Endothelial cell of umbilical vein (primary cell): ENCODE measurements at regions of chr7 and their contacts with region 1.

Region 1: DNA sequence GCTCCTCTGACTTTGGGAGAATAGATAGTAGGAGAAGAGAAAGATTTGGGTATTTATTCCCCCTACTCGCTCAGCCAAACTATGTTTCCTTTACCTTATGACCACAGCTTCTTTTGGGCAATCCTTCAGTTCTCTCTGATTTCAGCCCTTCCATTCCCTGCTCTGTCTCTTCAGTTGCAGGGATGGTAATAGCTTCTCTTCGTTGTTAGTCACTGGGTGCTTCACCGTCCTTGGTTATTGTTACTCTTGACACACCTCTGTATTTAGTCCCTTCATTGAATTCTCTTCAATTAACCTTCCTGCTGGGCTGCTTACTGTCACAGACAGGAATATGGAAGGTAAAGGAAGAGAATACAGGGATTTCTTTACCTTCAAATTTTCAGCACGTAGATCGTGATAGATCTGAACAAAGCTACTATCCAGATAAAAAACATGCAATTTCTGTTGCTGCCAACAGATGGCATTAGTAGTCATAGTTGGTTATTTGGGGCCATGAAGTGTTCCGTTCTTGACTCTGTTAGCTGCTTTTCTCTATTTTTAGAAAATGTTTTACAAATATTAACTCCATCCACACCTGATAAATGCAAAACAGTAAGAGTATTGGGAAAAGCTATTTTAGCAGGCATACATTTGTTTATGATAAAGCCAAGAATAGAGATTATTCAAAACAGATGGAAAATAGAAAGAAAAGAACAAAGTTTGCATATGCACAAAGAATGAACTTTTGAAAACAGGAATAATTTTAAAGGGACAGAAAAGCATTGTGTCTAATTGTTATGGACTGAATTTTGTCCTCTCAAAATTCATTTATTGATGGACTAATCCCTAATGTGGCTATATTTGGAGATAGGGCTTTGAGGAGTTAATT is 14.0 kb upstream of the PTTG1IP2 start:
- DNase-seq: peak; percentile 57
- H3K4me3 ChIP-seq: peak overlapping the region in 1 of 3 experiments; percentile 16
- H3K27ac ChIP-seq: no peak overlapping the region
- H3K4me1 ChIP-seq: no peaks in the 10 kb centered on the region
- H3K27me3 ChIP-seq: no peaks in the 10 kb centered on the region
- CTCF ChIP-seq: peak; percentile 55 to 56
- POLR2A ChIP-seq: no peak

Region 2: DNA sequence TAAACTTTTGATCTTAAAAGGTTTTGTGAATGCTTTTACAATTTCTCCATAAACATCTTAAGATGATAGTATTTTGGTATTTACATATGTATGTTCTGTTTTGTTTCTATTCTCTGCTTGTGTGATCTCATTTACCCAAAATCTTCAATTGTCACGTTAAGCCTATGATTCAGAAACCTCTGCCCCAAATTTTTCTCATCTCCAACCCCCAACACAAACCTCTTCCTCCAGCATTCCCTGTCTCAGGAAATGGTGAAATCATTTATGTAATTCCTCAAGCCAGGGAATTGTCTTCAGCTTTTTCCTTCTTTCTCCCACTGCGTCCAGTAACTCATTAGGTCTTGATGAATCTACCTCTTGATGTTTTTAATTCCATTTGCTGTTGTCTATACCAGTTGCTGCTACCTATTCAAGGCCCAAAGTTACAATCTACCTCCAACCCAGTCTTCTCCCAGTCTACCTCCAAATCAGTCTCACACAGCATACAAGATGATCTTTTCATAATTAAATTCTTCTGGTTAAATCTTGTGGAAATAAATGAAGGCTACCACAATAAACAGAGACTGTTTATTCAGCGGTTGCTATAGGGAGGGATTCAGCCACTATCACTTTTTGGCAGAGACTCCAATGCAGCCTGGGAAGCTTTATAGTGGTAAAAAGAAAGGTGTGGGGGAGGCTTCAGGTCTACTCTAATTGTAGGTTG is 204.6 kb before region 1 on chr7:
- CTCF ChIA-PET with region 1: no interaction called
- POLR2A ChIA-PET with region 1: no interaction called
- dilution Hi-C with region 1: no loop called
- intact Hi-C with region 1: no loop called
- DNase-seq: peak; percentile 6
- H3K4me3 ChIP-seq: no peak overlapping the region
- H3K27ac ChIP-seq: no peak overlapping the region
- H3K4me1 ChIP-seq: peaks cover 10% of the 10 kb centered on the region
- H3K27me3 ChIP-seq: no peaks in the 10 kb centered on the region
- CTCF ChIP-seq: no peak
- POLR2A ChIP-seq: no peak

Region 3: GRCh38 chr7:90271753-90272152 is 183.6 kb before region 1 on chr7:
- CTCF ChIA-PET with region 1: no interaction called
- POLR2A ChIA-PET with region 1: no interaction called
- dilution Hi-C with region 1: no loop called
- intact Hi-C with region 1: no loop called
- DNase-seq: no peak
- H3K4me3 ChIP-seq: no peak overlapping the region
- H3K27ac ChIP-seq: no peak overlapping the region
- H3K4me1 ChIP-seq: peaks cover 2% of the 10 kb centered on the region
- H3K27me3 ChIP-seq: no peaks in the 10 kb centered on the region
- CTCF ChIP-seq: no peak
- POLR2A ChIP-seq: no peak

Region 4: DNA sequence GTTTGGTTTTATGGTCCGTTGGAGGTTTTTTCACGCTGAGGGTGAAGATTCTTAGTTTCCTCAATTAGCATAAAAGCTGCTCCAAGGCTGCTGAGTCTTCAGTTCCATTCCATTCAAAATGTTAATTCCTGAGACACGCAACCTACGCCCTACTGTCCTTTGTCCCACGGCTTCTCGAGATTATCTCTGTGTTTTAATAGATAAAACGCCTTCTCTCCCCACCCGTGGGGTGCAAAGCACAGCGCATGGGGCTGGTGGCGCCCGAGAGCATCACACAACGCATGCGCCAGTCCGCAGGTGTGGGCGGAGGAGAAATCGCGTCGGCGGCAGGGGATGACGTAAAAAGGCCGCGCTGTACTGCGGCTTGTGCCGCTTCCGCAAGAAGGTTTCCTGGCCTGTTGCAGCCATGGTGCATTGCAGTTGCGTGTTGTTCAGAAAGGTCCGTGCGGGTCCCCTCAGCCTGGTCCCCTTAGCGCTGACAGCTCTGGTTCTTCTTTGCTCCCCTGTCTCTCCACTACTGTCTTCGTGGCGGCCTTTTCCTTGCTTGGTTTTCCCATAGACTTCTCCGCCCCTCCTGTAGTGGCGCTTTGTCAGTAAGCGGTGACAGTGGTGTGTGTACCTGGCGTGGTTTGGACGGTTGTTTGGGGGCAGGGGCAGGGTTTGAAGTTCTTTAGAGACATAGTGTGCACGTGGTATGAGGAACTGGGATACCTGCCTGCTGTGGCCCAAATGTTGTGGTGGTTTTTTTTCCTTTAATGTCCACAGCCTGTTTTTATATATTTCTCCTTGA is 108.9 kb before region 1 on chr7 and contains the start of gene GTPBP10:
- CTCF ChIA-PET with region 1: interaction called, 4 read pairs
- POLR2A ChIA-PET with region 1: no interaction called
- dilution Hi-C with region 1: no loop called
- intact Hi-C with region 1: loop called (anchors 1 kb)
- DNase-seq: peak; percentile 97
- H3K4me3 ChIP-seq: peak within 1 kb of the TSS; percentile 88 to 95 (median 91)
- H3K27ac ChIP-seq: peak within 1 kb of the TSS; percentile 57
- H3K4me1 ChIP-seq: peaks cover 12% of the 10 kb centered on the region
- H3K27me3 ChIP-seq: no peaks in the 10 kb centered on the region
- CTCF ChIP-seq: peak; percentile 69 to 71
- POLR2A ChIP-seq: peak; percentile 95
- total RNA-seq, gene GTPBP10: 14.6 and 16.7 TPM in 2 replicates

Region 5: DNA sequence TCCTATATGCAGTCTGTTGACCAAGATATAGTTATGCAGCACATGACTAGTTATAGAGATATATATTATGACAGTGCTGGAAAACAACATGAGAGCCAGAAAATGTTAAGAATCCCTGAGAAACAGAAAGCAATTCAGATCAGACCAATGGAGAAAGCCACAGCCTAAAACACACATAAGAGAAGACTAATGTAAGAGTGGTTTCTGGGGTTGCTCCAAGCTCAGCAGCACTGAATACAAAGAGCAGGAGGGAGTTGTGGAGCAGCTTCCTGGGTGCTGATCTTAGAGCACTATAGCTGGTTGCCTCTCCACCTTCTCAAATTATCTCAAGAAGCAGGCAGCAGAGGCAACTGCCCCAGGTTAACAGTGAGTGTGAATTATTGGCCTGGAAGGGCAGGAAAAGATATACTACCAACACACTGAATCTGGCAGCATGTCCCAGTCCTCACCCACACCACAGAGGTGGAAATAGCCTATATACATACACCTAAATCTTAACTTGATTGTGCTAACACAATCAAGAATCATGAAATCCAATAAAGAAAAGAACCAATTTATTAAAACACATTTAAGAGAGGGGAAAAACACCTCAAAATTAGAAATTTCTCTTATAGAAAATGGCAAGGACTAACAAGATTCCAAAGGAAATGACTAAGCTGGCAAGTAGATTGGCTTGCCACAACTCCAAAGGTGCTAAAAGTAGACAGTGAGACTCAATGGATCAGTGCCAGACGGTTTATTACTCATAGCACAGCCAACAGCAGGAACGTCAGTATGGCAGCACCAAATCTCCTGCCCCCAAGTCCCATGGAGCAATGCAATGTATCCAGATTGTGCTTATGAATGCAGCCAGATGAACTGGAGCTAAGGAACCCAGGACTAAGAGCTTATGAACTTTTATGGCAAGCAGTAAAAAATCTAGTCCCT is 19.1 kb after region 1 on chr7:
- CTCF ChIA-PET with region 1: interaction called, 15 read pairs
- POLR2A ChIA-PET with region 1: no interaction called
- dilution Hi-C with region 1: no loop called
- intact Hi-C with region 1: no loop called
- DNase-seq: peak; percentile 82
- H3K4me3 ChIP-seq: no peak overlapping the region
- H3K27ac ChIP-seq: peak overlapping the region; percentile 67
- H3K4me1 ChIP-seq: peaks cover 13% of the 10 kb centered on the region
- H3K27me3 ChIP-seq: no peaks in the 10 kb centered on the region
- CTCF ChIP-seq: no peak
- POLR2A ChIP-seq: no peak

Region 6: DNA sequence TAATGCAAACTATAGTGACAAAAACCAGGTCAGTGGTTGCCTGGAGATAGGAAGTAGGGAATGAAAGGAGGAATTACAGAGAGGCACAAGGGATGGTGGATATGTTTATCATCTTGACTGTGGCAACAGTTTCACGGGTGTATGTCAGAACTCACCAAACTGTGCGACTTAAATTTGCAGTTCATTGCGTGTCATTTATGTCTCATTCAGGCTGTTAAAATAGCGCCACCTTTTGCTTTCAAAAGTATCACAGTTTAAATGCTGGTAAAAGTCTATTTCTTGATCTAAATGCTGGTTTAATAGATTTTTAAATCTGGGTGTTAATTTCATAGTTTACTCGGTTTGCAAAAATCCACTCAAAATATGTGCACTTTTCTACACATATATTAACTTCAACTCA is 65.1 kb after region 1 on chr7:
- CTCF ChIA-PET with region 1: interaction called, 34 read pairs
- POLR2A ChIA-PET with region 1: no interaction called
- dilution Hi-C with region 1: no loop called
- intact Hi-C with region 1: loop called (anchors 1 kb)
- DNase-seq: peak; percentile 13
- H3K4me3 ChIP-seq: no peak overlapping the region
- H3K27ac ChIP-seq: no peak overlapping the region
- H3K4me1 ChIP-seq: no peaks in the 10 kb centered on the region
- H3K27me3 ChIP-seq: no peaks in the 10 kb centered on the region
- CTCF ChIP-seq: peak; percentile 28 to 39
- POLR2A ChIP-seq: no peak

Region 7: GRCh38 chr7:90595801-90596671 is 140.6 kb after region 1 on chr7 and contains the start of gene CDK14:
- CTCF ChIA-PET with region 1: interaction called, 24 read pairs
- POLR2A ChIA-PET with region 1: no interaction called
- dilution Hi-C with region 1: no loop called
- intact Hi-C with region 1: loop called (anchors 10 kb)
- DNase-seq: peak; percentile 68
- H3K4me3 ChIP-seq: peak within 1 kb of the TSS; percentile 81 to 95 (median 94)
- H3K27ac ChIP-seq: peak within 1 kb of the TSS; percentile 80
- H3K4me1 ChIP-seq: peaks cover 46% of the 10 kb centered on the region
- H3K27me3 ChIP-seq: no peaks in the 10 kb centered on the region
- CTCF ChIP-seq: peak; percentile 25 to 54
- POLR2A ChIP-seq: no peak
- total RNA-seq, gene CDK14: 34.2 and 41.5 TPM in 2 replicates

Region 8: GRCh38 chr7:90708841-90709317 is 253.5 kb after region 1 on chr7:
- CTCF ChIA-PET with region 1: interaction called, 11 read pairs
- POLR2A ChIA-PET with region 1: no interaction called
- dilution Hi-C with region 1: no loop called
- intact Hi-C with region 1: no loop called
- DNase-seq: peak; percentile 23
- H3K4me3 ChIP-seq: no peak overlapping the region
- H3K27ac ChIP-seq: no peak overlapping the region
- H3K4me1 ChIP-seq: peaks cover 12% of the 10 kb centered on the region
- H3K27me3 ChIP-seq: no peaks in the 10 kb centered on the region
- CTCF ChIP-seq: peak; percentile 60 to 61
- POLR2A ChIP-seq: no peak

Region 9: GRCh38 chr7:91034459-91035368 is 579.3 kb after region 1 on chr7:
- CTCF ChIA-PET with region 1: interaction called, 169 read pairs
- POLR2A ChIA-PET with region 1: no interaction called
- dilution Hi-C with region 1: no loop called
- intact Hi-C with region 1: loop called (anchors 1 kb)
- DNase-seq: peak; percentile 56
- H3K4me3 ChIP-seq: no peak overlapping the region
- H3K27ac ChIP-seq: no peak overlapping the region
- H3K4me1 ChIP-seq: no peaks in the 10 kb centered on the region
- H3K27me3 ChIP-seq: no peaks in the 10 kb centered on the region
- CTCF ChIP-seq: peak; percentile 35 to 61
- POLR2A ChIP-seq: no peak